ENCODE measurements at regions of chr3 and their contacts with region 1.

Region 1: GRCh38 chr3:127959846-127960245 is 44.8 kb downstream of the KBTBD12 start:
- DNase-seq: no peak
- ATAC-seq: peak; percentile 55

Region 2: DNA sequence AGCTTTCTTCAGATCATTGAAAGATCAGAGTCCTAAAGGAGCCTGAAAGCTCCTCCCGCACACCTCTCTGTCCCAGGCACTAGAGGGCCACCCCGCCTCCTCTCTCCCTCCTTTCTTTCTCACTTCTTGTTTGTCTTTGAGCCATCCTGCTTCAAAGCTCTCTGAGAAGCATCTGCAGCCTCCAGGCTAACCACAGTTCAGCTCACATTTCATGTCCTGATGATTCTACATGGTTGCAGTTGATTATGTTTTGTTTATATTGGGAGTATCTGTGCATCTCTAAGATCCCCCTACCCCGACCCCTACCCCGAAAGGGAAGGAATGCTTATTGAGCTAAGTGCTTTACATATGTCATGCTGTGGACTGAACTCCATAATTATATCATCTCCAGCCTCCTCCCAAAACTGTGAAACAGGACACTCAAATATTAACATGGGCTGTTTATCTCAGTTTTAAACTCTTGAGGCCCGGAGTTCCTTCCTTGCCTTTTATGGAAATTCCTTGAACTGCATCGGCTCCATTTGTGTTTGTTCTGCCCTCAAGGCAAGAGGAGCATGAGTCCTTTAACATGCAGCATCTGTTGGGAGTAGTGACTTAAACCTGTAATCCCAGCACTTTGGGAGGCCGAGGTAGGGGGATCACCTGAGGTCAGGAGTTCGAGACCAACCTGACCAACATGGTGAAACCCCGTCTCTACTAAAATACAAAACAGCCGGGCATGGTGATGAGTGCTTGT is 168.5 kb before region 1 on chr3:
- intact Hi-C with region 1: no loop called
- DNase-seq: no peak
- ATAC-seq: no peak

Region 3: GRCh38 chr3:127857333-127857732 is 102.5 kb before region 1 on chr3:
- intact Hi-C with region 1: loop called (anchors 10 kb)
- DNase-seq: no peak
- ATAC-seq: no peak

Region 4: GRCh38 chr3:127915115-127915936 is 44.5 kb before region 1 on chr3 and contains the start of gene KBTBD12:
- intact Hi-C with region 1: loop called (anchors 5 kb)
- DNase-seq: peak; percentile 81
- ATAC-seq: peak; percentile 83
- total RNA-seq, gene KBTBD12: 29.7 TPM

Measured in Right ventricle myocardium inferior (tissue), 1 donor.